AG04449 (cell line): ENCODE measurements at regions of chr17 and their contacts with region 1.

Region 1: DNA sequence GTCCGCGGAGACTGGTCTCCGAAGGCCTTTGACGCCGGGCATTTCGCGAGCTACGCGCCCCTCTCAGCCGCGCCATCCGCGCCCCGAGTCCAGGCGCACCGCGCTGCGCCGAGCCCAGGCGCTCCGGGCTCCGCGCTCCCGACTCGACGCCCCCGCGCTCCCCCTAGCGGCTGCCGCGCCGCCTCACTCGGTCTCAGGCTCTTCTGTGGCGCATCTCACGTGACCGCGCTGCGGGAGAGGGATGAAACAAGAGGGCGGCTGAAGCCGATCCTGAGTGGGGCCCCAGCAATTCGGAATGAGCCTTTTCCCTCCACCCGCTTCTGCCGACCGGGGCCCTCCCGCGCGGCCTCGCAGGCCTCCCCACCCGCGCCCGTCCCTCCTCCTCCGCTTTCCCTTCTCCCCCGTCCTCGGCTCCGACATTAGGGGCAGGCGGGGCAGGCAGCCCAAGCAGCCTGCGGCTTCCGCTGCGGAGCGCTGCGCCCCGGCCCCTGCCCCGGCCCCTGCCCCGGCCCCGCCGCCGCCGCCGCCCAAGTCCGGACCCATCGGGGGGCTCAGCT is 42.5 kb upstream of the AMZ2 start:
- DNase-seq: peak; percentile 17
- H3K4me3 ChIP-seq: peak overlapping the region; percentile 79
- CTCF ChIP-seq: peak; percentile 94

Region 2: DNA sequence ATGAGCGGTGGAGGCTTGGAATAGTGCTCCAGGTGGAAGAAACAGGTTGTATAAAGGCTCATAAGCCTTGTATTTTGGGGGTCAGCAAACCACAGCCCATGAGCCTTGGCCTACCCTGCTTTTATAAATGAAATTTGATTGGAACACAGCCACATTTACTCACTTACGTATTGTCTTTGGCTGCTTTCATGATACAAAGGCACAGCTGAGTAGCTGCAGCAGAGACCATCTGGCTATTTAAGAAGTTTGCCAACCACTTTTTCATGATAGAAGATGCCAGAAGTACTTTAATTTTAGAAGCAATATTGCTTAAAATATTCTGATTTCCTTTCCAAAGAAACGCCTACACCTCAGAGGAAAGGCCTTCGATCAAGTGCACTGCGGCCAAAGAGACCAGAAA is 282.8 kb before region 1 on chr17:
- CTCF ChIA-PET with region 1: no interaction called
- POLR2A ChIA-PET with region 1: no interaction called
- DNase-seq: no peak
- H3K4me3 ChIP-seq: no peak overlapping the region
- CTCF ChIP-seq: no peak

Region 3: GRCh38 chr17:67959288-67959900 is 245.9 kb before region 1 on chr17:
- CTCF ChIA-PET with region 1: interaction called, 15 read pairs
- POLR2A ChIA-PET with region 1: no interaction called
- DNase-seq: no peak
- H3K4me3 ChIP-seq: no peak overlapping the region
- CTCF ChIP-seq: no peak

Region 4: GRCh38 chr17:68057531-68057952 is 147.8 kb before region 1 on chr17:
- CTCF ChIA-PET with region 1: interaction called, 17 read pairs
- POLR2A ChIA-PET with region 1: no interaction called
- DNase-seq: no peak
- H3K4me3 ChIP-seq: no peak overlapping the region
- CTCF ChIP-seq: peak; percentile 31

Region 5: GRCh38 chr17:68184816-68185436 is 20.4 kb before region 1 on chr17:
- CTCF ChIA-PET with region 1: interaction called, 26 read pairs
- POLR2A ChIA-PET with region 1: no interaction called
- DNase-seq: no peak
- H3K4me3 ChIP-seq: no peak overlapping the region
- CTCF ChIP-seq: no peak

Region 6: GRCh38 chr17:68190495-68190894 is 14.8 kb before region 1 on chr17:
- CTCF ChIA-PET with region 1: interaction called, 26 read pairs
- POLR2A ChIA-PET with region 1: no interaction called
- DNase-seq: no peak
- H3K4me3 ChIP-seq: no peak overlapping the region
- CTCF ChIP-seq: no peak

Region 7: GRCh38 chr17:68247445-68248198 is 42.3 kb after region 1 on chr17 and contains the start of gene AMZ2:
- CTCF ChIA-PET with region 1: interaction called, 10 read pairs
- POLR2A ChIA-PET with region 1: interaction called, 3 read pairs
- DNase-seq: peak; percentile 34
- H3K4me3 ChIP-seq: peak within 1 kb of the TSS; percentile 80
- CTCF ChIP-seq: no peak

Region 8: DNA sequence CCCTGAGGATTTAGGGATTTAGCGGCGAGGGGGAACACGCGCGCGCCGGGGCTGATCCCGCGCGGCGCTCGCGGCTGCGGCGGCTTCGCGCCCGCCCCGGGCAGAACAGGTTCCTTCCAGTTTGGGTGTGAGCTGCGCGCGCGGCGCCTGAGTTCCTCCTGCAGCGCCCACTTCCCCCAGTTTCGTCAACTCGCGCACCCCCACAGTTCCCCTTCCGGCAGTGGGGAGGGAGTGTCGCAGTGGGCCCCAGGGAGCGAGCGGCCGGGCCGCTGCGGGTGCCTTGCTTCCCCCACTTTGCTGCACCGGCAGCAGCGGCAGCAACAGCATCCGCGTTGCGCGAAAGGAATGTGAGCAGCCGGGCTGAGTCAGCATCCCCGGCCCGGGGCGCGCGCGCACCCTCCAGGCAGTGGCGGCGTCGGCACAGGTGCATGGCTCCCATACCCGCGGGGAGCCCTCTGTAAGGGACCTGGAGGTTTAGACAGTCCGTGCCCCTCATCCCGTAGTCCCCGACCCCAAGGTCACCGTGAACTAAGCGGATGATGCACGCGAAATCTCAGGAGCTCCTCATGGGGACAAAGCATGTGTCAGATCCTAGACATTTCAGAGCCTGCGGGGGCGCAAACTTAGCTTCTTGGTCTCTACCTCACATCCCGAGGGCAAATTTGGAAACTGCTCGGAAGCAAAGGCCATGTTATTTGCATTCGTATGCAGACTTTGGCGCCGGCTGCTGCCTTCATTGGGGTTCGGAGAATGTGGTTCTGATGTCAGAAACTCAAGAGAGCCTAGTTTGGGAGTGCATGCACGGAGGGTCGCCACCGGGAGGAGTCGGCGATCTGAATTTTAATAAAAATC is 86.7 kb after region 1 on chr17:
- CTCF ChIA-PET with region 1: no interaction called
- POLR2A ChIA-PET with region 1: no interaction called
- DNase-seq: no peak
- H3K4me3 ChIP-seq: peak overlapping the region; percentile 61
- CTCF ChIP-seq: no peak

Region 9: DNA sequence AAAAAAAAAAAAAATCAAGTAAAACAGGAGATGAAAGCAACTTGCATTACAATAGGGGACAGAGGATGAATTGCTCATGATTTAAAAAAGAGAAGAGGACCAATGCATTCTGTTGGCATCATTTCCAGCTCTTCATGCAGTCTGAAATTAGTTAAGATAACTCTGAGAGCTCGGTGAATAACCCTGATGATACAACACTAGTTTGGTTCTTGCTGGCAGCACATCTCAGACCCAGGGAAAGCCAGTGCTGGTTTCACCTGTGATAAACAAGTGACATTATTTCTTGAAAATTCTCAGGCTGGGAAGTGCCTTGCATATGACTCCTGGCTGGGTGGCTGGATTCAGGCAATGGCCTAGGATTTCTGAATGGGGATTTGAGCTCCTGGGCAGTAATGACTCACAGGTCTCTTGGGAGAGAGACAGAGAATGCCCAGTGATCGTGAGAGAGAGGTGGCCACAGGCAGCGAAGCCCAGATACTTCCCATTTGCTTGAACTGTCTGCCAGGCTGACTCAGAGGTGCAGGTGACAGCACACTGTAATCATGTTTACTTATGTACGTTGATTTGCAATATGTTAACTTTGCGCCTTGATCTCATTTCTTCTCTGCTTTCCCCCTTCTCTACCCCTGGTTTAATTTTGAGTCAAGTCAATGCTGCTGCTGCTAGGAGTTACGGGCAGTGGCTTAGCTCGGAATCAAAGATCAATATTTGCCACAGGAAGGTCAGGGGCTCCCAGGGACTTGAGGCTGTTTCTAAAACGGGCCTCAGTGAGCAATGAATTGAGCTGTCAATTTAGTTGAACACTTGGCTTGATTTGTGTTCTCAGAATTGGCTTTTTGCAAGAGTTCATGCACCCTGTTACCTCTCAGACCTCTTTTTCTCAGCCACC is 113.0 kb after region 1 on chr17:
- CTCF ChIA-PET with region 1: no interaction called
- POLR2A ChIA-PET with region 1: no interaction called
- DNase-seq: no peak
- H3K4me3 ChIP-seq: no peak overlapping the region
- CTCF ChIP-seq: no peak

Region 10: GRCh38 chr17:68457539-68458259 is 252.4 kb after region 1 on chr17:
- CTCF ChIA-PET with region 1: interaction called, 10 read pairs
- POLR2A ChIA-PET with region 1: interaction called, 4 read pairs
- DNase-seq: peak; percentile 85
- H3K4me3 ChIP-seq: peak overlapping the region; percentile 94
- CTCF ChIP-seq: no peak